Right ventricle myocardium inferior (tissue), 1 donor: ENCODE measurements at regions of chr19 and their contacts with region 1.

Region 1: DNA sequence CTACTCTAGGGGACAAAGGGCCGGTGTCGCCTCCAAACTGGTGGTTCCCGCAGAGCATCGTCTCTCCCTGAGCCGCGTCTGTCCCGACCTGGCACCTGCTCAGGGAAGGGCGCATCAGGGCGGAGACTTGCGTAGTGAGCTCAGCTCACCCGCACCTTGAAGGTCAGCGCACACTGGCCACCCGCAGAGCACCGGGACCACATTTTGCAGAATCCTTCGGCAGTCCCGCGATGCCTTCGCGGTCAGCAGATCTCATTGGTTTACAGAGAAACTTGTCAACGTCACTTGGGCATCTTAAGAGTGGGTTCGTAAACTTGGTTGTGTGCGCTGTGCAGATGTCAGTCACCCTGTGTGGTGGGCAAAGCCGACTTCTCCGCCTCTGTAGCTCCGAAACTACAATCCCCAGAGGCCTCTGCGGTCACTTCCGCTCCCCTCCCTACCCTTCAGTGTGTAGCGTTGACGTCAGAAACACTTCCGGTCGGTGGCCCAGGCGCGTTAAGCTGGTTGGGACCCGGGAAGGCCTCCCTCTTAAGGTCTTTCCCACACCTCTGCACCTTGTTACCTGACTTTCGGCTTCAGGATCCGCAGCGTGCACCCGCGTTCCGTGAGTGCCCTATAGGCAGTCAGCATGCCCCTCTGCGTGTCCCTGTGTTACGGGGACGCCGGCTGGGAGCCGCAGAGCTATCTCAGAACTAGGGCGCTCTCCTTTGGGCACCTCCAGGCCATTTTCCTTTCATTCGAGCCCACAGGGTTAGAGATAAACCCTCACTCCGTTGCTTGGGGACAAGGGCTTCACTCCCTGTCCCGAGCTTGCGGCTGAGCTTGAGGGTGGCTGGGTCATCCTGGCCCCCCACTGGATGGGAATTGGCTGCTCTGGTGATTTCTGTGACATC is 36.5 kb upstream of the ZNF527 start:
- DNase-seq: peak; percentile 95
- ATAC-seq: peak; percentile 98

Region 2: DNA sequence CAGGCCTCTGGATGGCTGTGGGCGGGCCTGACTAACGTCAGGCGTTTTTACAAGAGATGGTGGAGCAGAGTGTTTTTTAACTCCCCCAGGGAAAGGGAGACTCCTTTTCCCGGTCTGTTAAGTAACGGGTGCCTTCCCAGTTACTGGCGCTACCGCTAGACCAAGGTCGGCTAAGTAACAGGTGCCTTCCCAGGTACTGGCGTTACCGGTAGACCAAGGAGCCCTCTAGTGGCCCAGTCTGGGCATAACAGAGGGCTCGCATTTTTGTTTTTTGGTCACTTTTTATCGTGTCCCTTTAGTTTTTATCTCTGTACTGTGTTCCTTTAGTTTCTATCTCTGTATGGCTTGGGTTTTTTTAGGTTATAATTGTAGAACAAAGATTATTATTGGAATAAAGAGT is 106.4 kb before region 1 on chr19:
- intact Hi-C with region 1: loop called (anchors 10 kb)
- DNase-seq: no peak
- ATAC-seq: no peak

Region 3: DNA sequence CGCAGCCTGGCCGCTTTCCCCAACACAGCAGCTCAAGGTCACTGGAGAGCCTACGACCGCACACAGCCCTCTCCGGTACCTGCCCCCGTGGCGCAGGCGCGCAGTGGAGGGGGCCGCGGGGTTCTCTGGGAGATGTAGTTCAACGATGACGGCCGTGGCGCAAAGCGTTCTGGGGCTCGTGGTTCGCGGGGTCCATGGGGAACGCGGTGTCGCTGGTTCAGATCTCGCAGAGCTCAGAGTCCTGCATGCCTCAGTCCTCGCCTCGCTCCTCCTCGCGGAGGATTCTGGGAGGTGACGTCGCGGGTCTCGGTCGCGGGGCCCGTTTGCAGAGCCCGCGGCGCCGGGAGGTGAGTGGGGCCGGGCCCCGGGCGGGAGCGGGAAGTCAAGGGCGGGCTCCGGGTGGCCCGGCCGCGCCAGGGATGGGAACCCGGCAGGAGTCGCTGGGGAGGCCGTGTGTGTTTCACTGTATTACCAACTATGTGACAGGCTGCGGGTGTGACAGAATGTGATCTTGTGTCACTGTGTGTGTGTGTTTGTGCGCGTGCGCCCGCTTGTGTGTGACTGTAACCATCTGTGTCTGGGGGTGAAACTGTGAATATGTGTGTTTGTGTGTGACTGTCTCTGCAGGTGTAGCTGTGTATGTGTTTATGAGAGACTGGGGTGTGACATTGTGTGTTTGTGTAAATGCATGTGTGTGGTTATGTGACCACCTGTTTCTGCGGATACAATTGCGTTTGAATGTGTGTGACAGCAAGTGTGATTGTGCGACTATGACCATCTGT is 36.6 kb after region 1 on chr19 and contains the start of gene ZNF527:
- intact Hi-C with region 1: loop called (anchors 2 kb)
- DNase-seq: peak; percentile 98
- ATAC-seq: peak; percentile 99
- total RNA-seq, gene ZNF527: 5.6 TPM